Naive thymus-derived CD4-positive, alpha-beta T cell (primary cell): ENCODE measurements at regions of chr10 and their contacts with region 1.

Region 1: DNA sequence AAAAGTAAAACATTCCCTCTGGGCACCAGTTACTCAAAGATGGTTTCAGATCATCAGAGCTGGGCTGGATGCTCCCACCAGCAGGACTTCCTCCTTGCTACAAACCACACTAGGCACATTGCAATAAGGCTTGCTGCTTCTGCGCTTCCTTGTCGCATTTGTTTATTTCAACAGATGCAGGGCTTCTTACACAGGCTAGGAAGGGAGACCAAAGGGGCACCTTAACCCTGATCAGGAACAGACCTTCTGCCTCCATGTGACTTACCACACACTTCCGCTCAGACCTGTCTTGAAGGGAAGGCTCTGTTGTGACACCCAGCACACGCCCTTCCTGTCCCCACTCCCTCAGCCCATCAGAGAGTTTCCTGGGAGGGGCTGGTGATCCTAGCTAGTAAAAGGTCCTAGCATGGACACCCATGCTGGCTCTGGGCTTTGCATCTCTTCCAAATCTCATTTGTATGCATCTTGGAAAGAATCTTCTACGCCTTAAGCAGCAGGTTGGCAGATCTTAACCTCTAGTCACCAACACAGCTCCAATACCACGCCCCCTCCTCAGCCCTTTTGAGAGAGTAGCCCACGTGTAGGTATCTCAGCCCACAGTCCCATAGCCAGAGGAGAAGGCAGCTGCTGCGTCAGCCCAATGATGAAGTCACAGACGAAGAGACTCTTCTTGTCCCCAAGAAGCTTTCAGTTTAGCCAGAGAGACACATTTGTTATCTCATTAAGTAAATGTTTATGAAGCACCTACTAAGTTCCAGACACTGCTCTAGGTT is 47.1 kb upstream of the SVIL start:
- DNase-seq: peak; percentile 28 to 90 (median 82)
- ATAC-seq: peak; percentile 98
- H3K4me3 ChIP-seq: peak overlapping the region; percentile 29
- H3K4me3 Mint-ChIP-seq: peak overlapping the region; percentile 58 to 89 (median 83)
- H3K27ac ChIP-seq: peak overlapping the region; percentile 71
- H3K27ac Mint-ChIP-seq: peak overlapping the region; percentile 76 to 99 (median 98)
- H3K4me1 ChIP-seq: peaks cover 46 to 65% of the 10 kb centered on the region in 2 donors
- H3K4me1 Mint-ChIP-seq: peaks cover 42 to 100% (median 92%) of the 10 kb centered on the region in 7 donors
- H3K27me3 ChIP-seq: no peaks in the 10 kb centered on the region
- H3K27me3 Mint-ChIP-seq: no peaks in the 10 kb centered on the region

Region 2: DNA sequence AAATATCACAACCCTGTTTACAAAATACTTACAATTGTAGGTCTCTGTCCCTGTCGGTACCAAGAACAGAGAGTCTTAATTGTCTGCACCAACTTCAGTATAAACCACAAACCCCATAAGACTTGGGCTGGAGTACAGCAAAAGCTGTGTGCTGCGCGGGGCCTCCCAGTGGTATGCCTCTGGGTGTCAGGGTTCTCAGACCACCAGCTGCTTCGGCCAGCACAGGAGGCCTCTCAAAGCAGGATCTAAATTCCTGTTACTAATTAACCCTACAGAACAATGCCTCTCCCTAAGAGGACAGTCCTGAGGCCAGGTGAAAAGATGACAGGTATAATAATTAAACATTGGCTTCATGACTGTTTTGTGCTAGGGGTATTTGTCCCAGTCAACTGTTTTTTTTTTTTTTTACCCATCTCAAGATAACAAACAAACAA is 46.1 kb before region 1 on chr10:
- CTCF ChIA-PET with region 1: no interaction called
- POLR2A ChIA-PET with region 1: no interaction called
- intact Hi-C with region 1: loop called in 1 of 2 experiments (anchors 2 kb)
- DNase-seq: peak in 2 of 9 donors; percentile 5 to 13
- ATAC-seq: peak; percentile 56
- H3K4me3 ChIP-seq: no peak overlapping the region
- H3K4me3 Mint-ChIP-seq: peak overlapping the region in 8 of 10 donors; percentile 34 to 67 (median 51)
- H3K27ac ChIP-seq: no peak overlapping the region
- H3K27ac Mint-ChIP-seq: peak overlapping the region in 7 of 9 donors; percentile 21 to 80 (median 32)
- H3K4me1 ChIP-seq: peaks cover 14 to 16% of the 10 kb centered on the region in 2 donors
- H3K4me1 Mint-ChIP-seq: peaks cover 25 to 60% (median 48%) of the 10 kb centered on the region in 7 donors
- H3K27me3 ChIP-seq: no peaks in the 10 kb centered on the region
- H3K27me3 Mint-ChIP-seq: no peaks in the 10 kb centered on the region

Region 3: GRCh38 chr10:29658984-29659965 is 22.6 kb before region 1 on chr10:
- CTCF ChIA-PET with region 1: interaction called, 3 read pairs
- POLR2A ChIA-PET with region 1: interaction called, 5 read pairs
- intact Hi-C with region 1: loop called (anchors 1 kb)
- DNase-seq: peak in 8 of 9 donors; percentile 34 to 82 (median 48)
- ATAC-seq: peak; percentile 97
- H3K4me3 ChIP-seq: peak overlapping the region; percentile 12
- H3K4me3 Mint-ChIP-seq: peak overlapping the region; percentile 39 to 81 (median 64)
- H3K27ac ChIP-seq: peak overlapping the region; percentile 2
- H3K27ac Mint-ChIP-seq: peak overlapping the region; percentile 3 to 84 (median 58)
- H3K4me1 ChIP-seq: peaks cover 14 to 30% of the 10 kb centered on the region in 2 donors
- H3K4me1 Mint-ChIP-seq: peaks cover 21 to 51% (median 29%) of the 10 kb centered on the region in 7 donors
- H3K27me3 ChIP-seq: no peaks in the 10 kb centered on the region
- H3K27me3 Mint-ChIP-seq: peaks cover 0 to 49% (median 0%) of the 10 kb centered on the region in 5 donors

Region 4: GRCh38 chr10:29702273-29703164 is 20.7 kb after region 1 on chr10:
- CTCF ChIA-PET with region 1: no interaction called
- POLR2A ChIA-PET with region 1: interaction called, 23 read pairs
- intact Hi-C with region 1: loop called in 1 of 2 experiments (anchors 1 kb)
- DNase-seq: peak in 4 of 9 donors; percentile 12 to 32 (median 18)
- ATAC-seq: peak; percentile 66
- H3K4me3 ChIP-seq: peak overlapping the region; percentile 37
- H3K4me3 Mint-ChIP-seq: peak overlapping the region; percentile 66 to 90 (median 79)
- H3K27ac ChIP-seq: peak overlapping the region; percentile 68
- H3K27ac Mint-ChIP-seq: peak overlapping the region; percentile 72 to 92 (median 89)
- H3K4me1 ChIP-seq: peaks cover 7 to 27% of the 10 kb centered on the region in 2 donors
- H3K4me1 Mint-ChIP-seq: peaks cover 22 to 81% (median 60%) of the 10 kb centered on the region in 7 donors
- H3K27me3 ChIP-seq: no peaks in the 10 kb centered on the region
- H3K27me3 Mint-ChIP-seq: no peaks in the 10 kb centered on the region